ENCODE measurements at regions of chr9 and their contacts with region 1.

Region 1: GRCh38 chr9:91422758-91423711 is 597 bp downstream of the NFIL3 start:
- DNase-seq: peak; percentile 82
- ATAC-seq: peak; percentile 34
- H3K4me3 Mint-ChIP-seq: peak overlapping the region; percentile 86
- H3K27ac Mint-ChIP-seq: peak overlapping the region; percentile 95
- H3K4me1 Mint-ChIP-seq: peaks cover 57% of the 10 kb centered on the region
- H3K27me3 Mint-ChIP-seq: no peaks in the 10 kb centered on the region

Region 2: DNA sequence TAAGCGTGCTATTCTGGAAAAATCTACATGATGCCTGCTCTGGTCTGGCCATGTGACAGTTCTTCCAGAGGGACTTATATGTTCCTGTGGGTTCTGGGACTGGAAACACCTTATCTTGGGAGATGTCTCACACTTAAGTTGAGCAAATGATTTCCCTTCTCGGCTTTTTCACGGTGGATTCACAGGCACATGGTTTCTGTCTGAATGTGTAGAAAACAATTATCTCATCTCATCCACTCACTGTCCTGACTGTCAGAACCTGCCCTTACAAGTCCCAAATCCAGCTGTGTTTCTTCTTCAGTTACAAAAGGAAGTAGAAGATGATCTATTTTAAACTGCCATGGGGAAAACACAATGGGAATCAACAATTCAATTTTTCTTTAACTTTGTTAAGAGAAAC is 437.4 kb before region 1 on chr9:
- CTCF ChIA-PET with region 1: interaction called, 10 read pairs
- DNase-seq: no peak
- ATAC-seq: no peak
- H3K4me3 Mint-ChIP-seq: no peak overlapping the region
- H3K27ac Mint-ChIP-seq: no peak overlapping the region
- H3K4me1 Mint-ChIP-seq: peaks cover 8% of the 10 kb centered on the region
- H3K27me3 Mint-ChIP-seq: no peaks in the 10 kb centered on the region

Region 3: GRCh38 chr9:91328186-91328585 is 94.8 kb before region 1 on chr9:
- CTCF ChIA-PET with region 1: no interaction called
- DNase-seq: no peak
- ATAC-seq: no peak
- H3K4me3 Mint-ChIP-seq: no peak overlapping the region
- H3K27ac Mint-ChIP-seq: no peak overlapping the region
- H3K4me1 Mint-ChIP-seq: no peaks in the 10 kb centered on the region
- H3K27me3 Mint-ChIP-seq: no peaks in the 10 kb centered on the region

Region 4: DNA sequence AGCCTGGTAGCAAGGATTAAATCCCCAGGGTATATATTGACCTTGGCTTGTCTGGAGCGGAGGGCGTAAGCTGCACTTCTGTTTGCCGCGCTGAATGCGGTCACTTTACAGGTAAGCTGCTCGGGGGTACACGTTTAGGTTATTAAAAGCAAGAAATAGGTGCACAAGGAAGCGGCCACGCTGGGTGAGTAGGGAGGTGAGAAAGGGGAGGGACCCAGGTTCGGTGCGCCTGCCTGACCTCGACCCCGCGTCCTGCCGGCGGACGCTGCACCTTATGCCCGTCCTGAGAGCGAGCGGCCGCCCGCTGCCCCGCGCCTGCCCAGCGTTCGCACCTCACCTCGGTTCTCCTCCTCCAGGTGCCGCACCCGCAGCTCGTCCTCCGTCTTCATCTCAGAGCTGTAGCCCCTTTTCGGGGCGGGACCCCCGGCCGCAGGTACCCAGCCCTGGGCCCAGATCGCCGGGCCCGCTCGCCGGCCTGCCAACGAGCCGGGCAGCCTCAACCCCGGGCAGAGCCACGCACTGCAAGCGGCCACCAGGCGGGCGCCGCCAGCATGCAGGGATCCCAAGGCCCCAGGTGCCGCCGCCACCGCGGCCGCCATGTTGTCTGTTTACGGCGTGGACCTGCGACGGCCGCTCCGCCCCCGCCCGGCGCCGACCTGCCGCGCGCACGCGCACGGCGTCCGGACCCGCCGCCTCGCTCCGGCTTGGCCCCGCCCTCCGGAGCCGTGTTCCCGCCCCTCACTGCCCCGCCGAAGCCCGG is 61.6 kb before region 1 on chr9 and contains the start of gene AUH:
- CTCF ChIA-PET with region 1: interaction called, 29 read pairs
- DNase-seq: peak; percentile 89
- ATAC-seq: peak; percentile 86
- H3K4me3 Mint-ChIP-seq: peak within 1 kb of the TSS; percentile 90
- H3K27ac Mint-ChIP-seq: peak within 1 kb of the TSS; percentile 90
- H3K4me1 Mint-ChIP-seq: peaks cover 57% of the 10 kb centered on the region
- H3K27me3 Mint-ChIP-seq: no peaks in the 10 kb centered on the region
- total RNA-seq, gene AUH: 33.5 to 36.1 TPM

Region 5: GRCh38 chr9:91395553-91396471 is 27.2 kb before region 1 on chr9:
- CTCF ChIA-PET with region 1: interaction called, 29 read pairs
- DNase-seq: peak; percentile 53
- ATAC-seq: peak; percentile 81
- H3K4me3 Mint-ChIP-seq: peak overlapping the region; percentile 56
- H3K27ac Mint-ChIP-seq: peak overlapping the region; percentile 85
- H3K4me1 Mint-ChIP-seq: peaks cover 26% of the 10 kb centered on the region
- H3K27me3 Mint-ChIP-seq: no peaks in the 10 kb centered on the region

Region 6: DNA sequence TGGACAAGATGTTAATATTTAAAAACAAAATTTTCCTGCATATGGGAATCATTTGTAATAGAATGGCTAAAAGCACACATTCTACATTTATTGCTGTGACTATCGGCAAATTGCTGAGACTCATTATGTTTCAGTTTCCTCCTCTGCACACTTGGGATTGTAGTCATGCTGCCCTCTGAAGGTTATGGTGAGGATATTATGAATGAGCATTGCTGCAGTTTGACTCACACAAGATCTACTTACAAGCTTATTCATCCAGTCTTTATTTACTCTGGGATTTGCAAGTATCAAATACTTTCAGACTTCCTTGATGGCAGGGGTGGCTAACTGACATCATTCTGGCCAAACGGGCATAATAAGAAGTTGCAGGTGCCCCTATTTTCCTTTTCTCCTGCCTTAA is 10.1 kb after region 1 on chr9:
- CTCF ChIA-PET with region 1: interaction called, 19 read pairs
- DNase-seq: no peak
- ATAC-seq: peak; percentile 95
- H3K4me3 Mint-ChIP-seq: no peak overlapping the region
- H3K27ac Mint-ChIP-seq: no peak overlapping the region
- H3K4me1 Mint-ChIP-seq: peaks cover 30% of the 10 kb centered on the region
- H3K27me3 Mint-ChIP-seq: peaks cover 19% of the 10 kb centered on the region